Endothelial cell of umbilical vein (primary cell): ENCODE measurements at regions of chr15 and their contacts with region 1.

Region 1: GRCh38 chr15:100873029-100873677 is 6.5 kb upstream of the ALDH1A3 start:
- DNase-seq: peak; percentile 82
- H3K4me3 ChIP-seq: no peak overlapping the region
- H3K27ac ChIP-seq: no peak overlapping the region
- H3K4me1 ChIP-seq: no peaks in the 10 kb centered on the region
- H3K27me3 ChIP-seq: peaks cover 5 to 6% of the 10 kb centered on the region in 2 experiments
- CTCF ChIP-seq: peak; percentile 73 to 74
- POLR2A ChIP-seq: no peak

Region 2: DNA sequence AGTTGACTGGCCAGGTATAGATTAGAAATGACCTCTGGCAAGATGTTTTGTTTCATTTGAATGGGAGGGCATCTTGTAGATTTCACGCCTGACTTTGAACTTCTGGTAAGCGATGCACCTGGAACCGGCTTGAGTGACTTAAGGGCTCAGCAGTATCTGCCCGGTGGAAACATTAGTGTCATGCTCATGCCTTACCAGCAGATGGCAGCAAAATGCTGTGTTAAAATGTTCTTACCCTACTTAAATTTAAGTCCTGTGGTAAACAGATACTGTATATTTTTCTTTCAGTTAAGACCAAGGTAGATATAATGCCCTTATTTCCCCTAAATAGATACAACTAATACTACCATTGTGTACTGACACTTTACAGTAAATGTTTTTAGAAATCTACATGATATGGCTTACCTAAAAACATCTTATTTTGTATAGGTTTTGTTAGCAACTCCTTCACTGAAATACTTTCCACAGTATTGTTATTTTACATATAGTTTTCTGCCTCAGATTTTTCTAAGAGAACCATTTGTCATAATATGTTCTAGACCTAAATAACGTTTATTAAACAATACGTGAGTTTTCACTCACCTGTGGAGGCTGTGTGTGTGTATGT is 245.3 kb before region 1 on chr15:
- CTCF ChIA-PET with region 1: interaction called, 66 read pairs
- POLR2A ChIA-PET with region 1: no interaction called
- dilution Hi-C with region 1: no loop called
- intact Hi-C with region 1: loop called (anchors 1 kb)
- DNase-seq: peak; percentile 92
- H3K4me3 ChIP-seq: no peak overlapping the region
- H3K27ac ChIP-seq: no peak overlapping the region
- H3K4me1 ChIP-seq: no peaks in the 10 kb centered on the region
- H3K27me3 ChIP-seq: no peaks in the 10 kb centered on the region
- CTCF ChIP-seq: peak; percentile 67 to 76
- POLR2A ChIP-seq: no peak

Region 3: GRCh38 chr15:100671858-100672543 is 201.2 kb before region 1 on chr15:
- CTCF ChIA-PET with region 1: interaction called, 40 read pairs
- POLR2A ChIA-PET with region 1: no interaction called
- dilution Hi-C with region 1: no loop called
- intact Hi-C with region 1: loop called (anchors 1 kb)
- DNase-seq: peak; percentile 42
- H3K4me3 ChIP-seq: no peak overlapping the region
- H3K27ac ChIP-seq: no peak overlapping the region
- H3K4me1 ChIP-seq: no peaks in the 10 kb centered on the region
- H3K27me3 ChIP-seq: no peaks in the 10 kb centered on the region
- CTCF ChIP-seq: peak; percentile 50 to 60
- POLR2A ChIP-seq: no peak

Region 4: DNA sequence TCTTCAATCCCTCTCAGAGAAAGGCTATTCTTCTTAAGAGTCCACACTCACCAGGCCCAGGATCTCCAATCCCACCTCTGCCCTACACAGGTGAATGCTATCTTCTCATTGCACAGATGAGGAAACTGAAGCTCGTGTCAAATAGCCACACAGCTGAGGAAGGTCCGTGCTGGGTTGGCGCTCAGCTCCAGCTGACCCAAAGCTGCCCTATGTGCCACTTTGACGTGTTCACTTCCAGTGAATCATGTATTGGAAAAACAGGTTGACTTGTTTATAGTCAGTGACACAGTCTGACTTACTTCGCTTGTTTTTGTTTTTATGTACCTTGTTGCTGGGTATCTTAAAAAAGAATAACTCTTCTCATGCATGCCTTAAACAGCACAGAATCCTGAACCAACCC is 26.0 kb before region 1 on chr15:
- CTCF ChIA-PET with region 1: interaction called, 12 read pairs
- POLR2A ChIA-PET with region 1: no interaction called
- dilution Hi-C with region 1: no loop called
- intact Hi-C with region 1: no loop called
- DNase-seq: no peak
- H3K4me3 ChIP-seq: no peak overlapping the region
- H3K27ac ChIP-seq: no peak overlapping the region
- H3K4me1 ChIP-seq: peaks cover 6% of the 10 kb centered on the region
- H3K27me3 ChIP-seq: no peaks in the 10 kb centered on the region
- CTCF ChIP-seq: no peak
- POLR2A ChIP-seq: no peak

Region 5: DNA sequence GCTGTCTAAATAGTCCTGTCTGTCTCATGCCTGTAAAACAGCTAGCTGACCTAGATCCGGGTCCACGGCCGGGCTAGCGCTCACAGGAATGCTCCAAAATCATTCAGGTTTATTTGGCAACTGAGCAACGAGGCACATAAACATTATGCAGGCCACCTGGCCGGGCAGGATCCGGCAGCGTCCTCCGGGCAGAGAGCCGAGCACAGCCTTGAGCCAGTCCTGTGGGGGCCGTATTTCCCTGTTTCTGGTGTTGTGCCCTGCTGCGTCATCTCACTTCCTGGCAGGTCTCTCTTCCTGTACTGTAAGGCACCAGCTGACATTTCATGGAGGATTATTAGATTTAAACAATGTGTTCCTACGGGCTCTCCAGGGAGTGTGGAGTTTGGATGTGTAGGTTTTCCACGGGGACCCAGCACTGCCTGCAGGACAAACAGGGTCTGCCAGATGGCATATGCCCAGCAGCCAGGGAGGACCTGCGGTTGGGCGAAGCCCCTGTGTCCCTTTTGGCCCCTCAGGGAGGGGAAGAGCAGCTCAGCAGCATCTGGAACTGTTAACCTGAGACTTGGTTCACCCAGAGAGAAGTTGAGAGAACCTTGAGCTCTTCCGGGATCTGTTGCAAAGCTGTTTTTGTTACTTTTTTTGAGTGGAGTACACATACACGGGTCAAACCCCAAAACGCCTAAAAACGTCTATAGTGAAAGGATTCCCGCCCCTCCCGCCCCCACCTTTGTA is 29.4 kb after region 1 on chr15:
- CTCF ChIA-PET with region 1: interaction called, 15 read pairs
- POLR2A ChIA-PET with region 1: no interaction called
- dilution Hi-C with region 1: no loop called
- intact Hi-C with region 1: no loop called
- DNase-seq: peak; percentile 90
- H3K4me3 ChIP-seq: peak overlapping the region in 1 of 3 experiments; percentile 15
- H3K27ac ChIP-seq: peak overlapping the region; percentile 81
- H3K4me1 ChIP-seq: peaks cover 27% of the 10 kb centered on the region
- H3K27me3 ChIP-seq: no peaks in the 10 kb centered on the region
- CTCF ChIP-seq: no peak
- POLR2A ChIP-seq: no peak